ENCODE measurements at regions of chr16 and their contacts with region 1.

Region 1: GRCh38 chr16:69761983-69762813 is at the start of gene WWP2:
- DNase-seq: peak; percentile 70 to 74
- H3K4me3 ChIP-seq: peak within 1 kb of the TSS; percentile 99
- H3K27ac ChIP-seq: peak within 1 kb of the TSS; percentile 81
- H3K4me1 ChIP-seq: peaks cover 18% of the 10 kb centered on the region
- H3K27me3 ChIP-seq: no peaks in the 10 kb centered on the region
- CTCF ChIP-seq: no peak
- total RNA-seq, gene WWP2: 38.8 and 46.4 TPM in 2 replicates

Region 2: GRCh38 chr16:69339289-69340108 is 422.7 kb before region 1 on chr16 and contains the starts of genes COG8 and NIP7:
- CTCF ChIA-PET with region 1: no interaction called
- POLR2A ChIA-PET with region 1: no interaction called
- intact Hi-C with region 1: loop called (anchors 10 kb)
- DNase-seq: peak; percentile 94 to 97
- H3K4me3 ChIP-seq: peak within 1 kb of the TSS; percentile 88
- H3K27ac ChIP-seq: peak within 1 kb of the TSS; percentile 73
- H3K4me1 ChIP-seq: peaks cover 16% of the 10 kb centered on the region
- H3K27me3 ChIP-seq: no peaks in the 10 kb centered on the region
- CTCF ChIP-seq: peak; percentile 84
- total RNA-seq, gene COG8: 39.9 and 41.9 TPM in 2 replicates
- total RNA-seq, gene NIP7: 23.6 and 29.5 TPM in 2 replicates